Naive thymus-derived CD4-positive, alpha-beta T cell (primary cell): ENCODE measurements at regions of chr13 and their contacts with region 1.

Region 1: GRCh38 chr13:110575322-110576069 is 14.0 kb upstream of the RAB20 start:
- DNase-seq: no peak
- ATAC-seq: peak; percentile 72
- H3K4me3 ChIP-seq: no peak overlapping the region
- H3K4me3 Mint-ChIP-seq: peak overlapping the region in 1 of 10 donors; percentile 35
- H3K27ac ChIP-seq: no peak overlapping the region
- H3K27ac Mint-ChIP-seq: no peak overlapping the region
- H3K4me1 ChIP-seq: no peaks in the 10 kb centered on the region
- H3K4me1 Mint-ChIP-seq: peaks cover 0 to 14% (median 8%) of the 10 kb centered on the region in 7 donors
- H3K27me3 ChIP-seq: no peaks in the 10 kb centered on the region
- H3K27me3 Mint-ChIP-seq: peaks cover 40 to 57% (median 49%) of the 10 kb centered on the region in 5 donors

Region 2: DNA sequence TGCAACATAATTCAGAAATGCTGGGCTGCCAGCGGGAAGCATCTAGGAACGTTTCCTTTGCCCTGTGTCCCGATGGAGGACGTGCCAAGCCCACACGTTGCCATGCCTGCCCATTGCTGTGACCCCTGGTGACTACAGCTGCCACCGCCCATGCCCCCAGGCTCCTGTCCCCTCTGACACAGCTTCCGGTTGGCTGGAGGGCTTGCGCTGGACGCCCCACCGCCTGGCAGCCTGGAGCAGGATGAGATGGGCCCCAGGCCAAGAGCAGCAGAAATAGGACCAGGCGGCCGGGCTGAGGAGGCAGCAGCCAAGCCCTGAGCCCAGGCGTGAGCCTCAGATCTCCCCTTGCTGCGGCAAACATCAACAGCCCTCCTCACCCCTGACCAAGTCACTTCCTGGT is 142.5 kb before region 1 on chr13:
- CTCF ChIA-PET with region 1: no interaction called
- POLR2A ChIA-PET with region 1: no interaction called
- intact Hi-C with region 1: no loop called
- DNase-seq: no peak
- ATAC-seq: no peak
- H3K4me3 ChIP-seq: no peak overlapping the region
- H3K4me3 Mint-ChIP-seq: no peak overlapping the region
- H3K27ac ChIP-seq: no peak overlapping the region
- H3K27ac Mint-ChIP-seq: no peak overlapping the region
- H3K4me1 ChIP-seq: no peaks in the 10 kb centered on the region
- H3K4me1 Mint-ChIP-seq: no peaks in the 10 kb centered on the region
- H3K27me3 ChIP-seq: no peaks in the 10 kb centered on the region
- H3K27me3 Mint-ChIP-seq: peaks cover 37 to 76% (median 54%) of the 10 kb centered on the region in 5 donors

Region 3: GRCh38 chr13:110455941-110456340 is 119.6 kb before region 1 on chr13:
- CTCF ChIA-PET with region 1: no interaction called
- POLR2A ChIA-PET with region 1: no interaction called
- intact Hi-C with region 1: loop called in 1 of 2 experiments (anchors 1 kb)
- DNase-seq: peak; percentile 21 to 58 (median 44)
- ATAC-seq: peak; percentile 87
- H3K4me3 ChIP-seq: no peak overlapping the region
- H3K4me3 Mint-ChIP-seq: peak overlapping the region in 9 of 10 donors; percentile 3 to 74 (median 45)
- H3K27ac ChIP-seq: no peak overlapping the region
- H3K27ac Mint-ChIP-seq: no peak overlapping the region
- H3K4me1 ChIP-seq: no peaks in the 10 kb centered on the region
- H3K4me1 Mint-ChIP-seq: peaks cover 2 to 6% (median 5%) of the 10 kb centered on the region in 7 donors
- H3K27me3 ChIP-seq: no peaks in the 10 kb centered on the region
- H3K27me3 Mint-ChIP-seq: peaks cover 14 to 29% (median 19%) of the 10 kb centered on the region in 5 donors

Region 4: GRCh38 chr13:110907951-110908898 is 332.7 kb after region 1 on chr13:
- CTCF ChIA-PET with region 1: no interaction called
- POLR2A ChIA-PET with region 1: no interaction called
- intact Hi-C with region 1: no loop called
- DNase-seq: no peak
- ATAC-seq: no peak
- H3K4me3 ChIP-seq: no peak overlapping the region
- H3K4me3 Mint-ChIP-seq: peak overlapping the region in 1 of 10 donors; percentile 34
- H3K27ac ChIP-seq: no peak overlapping the region
- H3K27ac Mint-ChIP-seq: peak overlapping the region in 1 of 9 donors; percentile 7
- H3K4me1 ChIP-seq: peaks cover 14 to 17% of the 10 kb centered on the region in 2 donors
- H3K4me1 Mint-ChIP-seq: peaks cover 42 to 76% (median 71%) of the 10 kb centered on the region in 7 donors
- H3K27me3 ChIP-seq: no peaks in the 10 kb centered on the region
- H3K27me3 Mint-ChIP-seq: no peaks in the 10 kb centered on the region